ENCODE measurements at regions of chr11 and their contacts with region 1.

Region 1: GRCh38 chr11:118290923-118291322 is 13.6 kb upstream of the CD3E start:
- DNase-seq: peak; percentile 50
- H3K4me3 Mint-ChIP-seq: peak overlapping the region; percentile 44
- H3K27ac Mint-ChIP-seq: no peak overlapping the region
- H3K4me1 Mint-ChIP-seq: peaks cover 34% of the 10 kb centered on the region
- H3K27me3 Mint-ChIP-seq: no peaks in the 10 kb centered on the region
- CTCF ChIP-seq: peak; percentile 12

Region 2: DNA sequence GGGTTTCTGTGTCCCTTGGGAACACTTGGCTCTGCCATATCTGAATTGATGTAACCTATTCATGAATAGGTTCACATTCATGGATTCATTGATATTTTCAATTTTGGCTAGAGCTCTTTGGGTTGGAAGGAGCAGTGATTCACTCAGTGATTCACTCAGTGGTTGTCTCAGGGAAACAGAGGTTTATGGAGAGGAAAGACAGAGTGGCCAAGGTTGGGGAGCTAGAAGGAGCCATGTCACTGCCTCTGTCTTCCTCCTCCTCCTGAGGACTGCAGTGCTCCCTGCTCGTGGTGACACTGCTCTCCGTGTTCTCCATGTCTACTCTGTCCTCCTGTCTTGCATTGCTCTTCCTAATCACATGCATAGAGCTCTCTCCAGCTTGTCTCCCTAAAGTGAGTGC is 945.9 kb before region 1 on chr11:
- CTCF ChIA-PET with region 1: no interaction called
- intact Hi-C with region 1: no loop called
- DNase-seq: no peak
- H3K4me3 Mint-ChIP-seq: no peak overlapping the region
- H3K27ac Mint-ChIP-seq: no peak overlapping the region
- H3K4me1 Mint-ChIP-seq: no peaks in the 10 kb centered on the region
- H3K27me3 Mint-ChIP-seq: no peaks in the 10 kb centered on the region
- CTCF ChIP-seq: no peak

Region 3: DNA sequence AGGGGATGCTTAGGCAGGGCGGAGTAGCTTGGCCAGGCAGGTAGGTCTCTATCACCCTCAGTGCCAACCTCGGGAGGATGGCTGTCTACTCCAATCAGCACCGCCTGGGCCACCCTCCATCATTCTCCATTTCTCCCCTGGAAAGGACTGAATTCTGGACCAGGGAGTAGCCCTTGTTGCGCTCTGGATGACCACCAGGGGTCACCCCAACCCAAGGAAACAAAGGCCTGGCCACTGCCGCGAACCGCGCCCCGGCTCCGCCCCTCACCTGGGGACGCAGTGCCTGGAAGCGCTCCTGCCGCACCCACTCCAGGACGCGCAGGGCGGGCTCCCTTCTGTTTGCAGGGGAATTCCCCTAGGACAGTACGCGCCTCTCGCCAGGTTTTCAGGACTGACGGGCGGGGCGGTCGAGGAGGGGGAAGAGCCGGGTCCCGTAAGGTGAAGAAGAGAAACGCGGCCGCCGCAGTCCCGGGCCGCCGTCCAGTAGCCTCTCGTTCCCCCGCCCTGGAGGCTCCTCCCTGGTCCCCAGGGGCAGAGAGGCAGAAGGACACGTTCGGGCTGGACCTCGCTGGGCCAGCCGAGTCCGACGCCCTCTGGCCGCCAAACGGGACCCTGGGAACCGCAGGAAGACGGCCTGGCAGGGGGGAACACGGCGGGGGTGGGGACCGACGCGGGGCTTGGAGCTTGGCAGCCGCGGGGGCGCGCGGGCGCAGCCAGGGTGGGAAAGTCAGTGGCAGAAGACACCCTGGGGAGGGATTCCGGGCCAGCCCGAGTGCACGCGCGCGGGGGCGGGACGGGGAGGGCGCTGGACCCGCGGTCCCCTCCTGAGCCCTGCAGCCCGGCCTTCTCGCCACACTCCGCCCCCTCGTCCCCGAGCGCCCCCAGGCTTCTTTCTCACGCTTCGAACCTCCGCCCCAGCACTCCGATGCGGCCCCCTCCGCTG is 145.4 kb before region 1 on chr11:
- CTCF ChIA-PET with region 1: no interaction called
- intact Hi-C with region 1: loop called (anchors 1 kb)
- DNase-seq: peak; percentile 91
- H3K4me3 Mint-ChIP-seq: peak overlapping the region; percentile 81
- H3K27ac Mint-ChIP-seq: no peak overlapping the region
- H3K4me1 Mint-ChIP-seq: peaks cover 9% of the 10 kb centered on the region
- H3K27me3 Mint-ChIP-seq: peaks cover 61% of the 10 kb centered on the region
- CTCF ChIP-seq: peak; percentile 73

Region 4: DNA sequence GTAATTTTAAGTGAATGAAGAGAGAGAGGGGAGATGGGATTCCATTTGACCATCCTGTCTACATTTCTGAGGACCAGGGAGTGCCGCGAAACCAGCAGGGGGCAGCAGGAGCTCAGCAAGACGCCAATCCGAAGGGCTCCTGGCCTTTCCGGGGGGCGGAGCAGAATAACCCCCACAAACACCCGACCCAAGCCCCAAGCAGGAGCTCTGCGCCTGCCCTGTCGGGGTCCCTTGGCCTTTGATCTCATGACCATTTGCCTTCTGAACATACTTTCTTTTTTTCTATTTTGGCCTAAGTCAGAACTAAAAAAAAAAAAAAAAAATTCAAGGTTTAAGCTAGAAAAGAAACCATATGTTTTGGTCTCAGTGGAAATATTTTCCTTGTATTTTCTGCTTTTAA is 92.6 kb before region 1 on chr11:
- CTCF ChIA-PET with region 1: interaction called, 20 read pairs
- intact Hi-C with region 1: loop called (anchors 1 kb)
- DNase-seq: peak; percentile 79
- H3K4me3 Mint-ChIP-seq: no peak overlapping the region
- H3K27ac Mint-ChIP-seq: no peak overlapping the region
- H3K4me1 Mint-ChIP-seq: peaks cover 15% of the 10 kb centered on the region
- H3K27me3 Mint-ChIP-seq: no peaks in the 10 kb centered on the region
- CTCF ChIP-seq: peak; percentile 78

Region 5: DNA sequence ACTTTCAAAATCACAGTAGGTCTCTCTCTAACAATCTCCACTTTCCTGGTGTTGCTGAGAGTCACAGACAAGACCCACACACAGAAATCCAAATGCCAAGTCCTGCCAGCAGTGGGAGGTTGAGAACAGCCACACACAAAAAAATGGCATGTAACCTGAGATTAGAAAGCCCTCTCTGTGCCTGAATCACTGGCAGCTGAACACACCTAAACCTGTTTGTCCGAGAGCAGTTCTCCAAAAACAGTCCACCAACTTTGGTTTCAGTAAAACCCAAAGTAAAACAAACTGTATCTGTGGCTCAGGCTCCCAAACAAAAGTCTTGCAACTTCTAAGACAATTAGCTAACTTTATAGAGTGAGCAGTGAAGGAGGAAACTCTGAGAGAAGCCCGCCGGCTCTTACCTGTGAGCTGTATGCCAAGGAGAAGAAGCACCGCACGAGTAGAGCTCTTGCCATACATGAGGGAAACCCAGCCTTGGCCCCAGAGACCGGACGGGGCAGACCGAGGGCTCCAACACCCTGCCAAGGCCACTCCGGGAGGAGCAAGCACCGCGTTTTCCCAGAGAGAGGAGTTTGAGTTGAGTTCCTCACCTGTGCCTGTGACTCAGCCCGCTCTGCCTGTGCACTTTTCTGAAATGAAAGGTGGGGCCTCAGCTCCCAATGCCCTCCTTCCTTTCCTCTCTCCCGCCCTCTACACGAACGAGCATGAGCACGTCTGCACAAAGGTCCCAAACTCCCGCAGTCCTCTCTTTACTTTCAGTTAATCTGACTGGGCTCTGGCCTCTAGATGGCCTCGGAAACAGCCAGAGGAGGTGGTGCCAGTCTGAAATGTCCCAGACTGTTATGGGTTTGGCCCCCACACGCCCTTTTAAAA is 27.0 kb before region 1 on chr11 and contains the start of gene MPZL2:
- CTCF ChIA-PET with region 1: interaction called, 3 read pairs
- intact Hi-C with region 1: loop called (anchors 2 kb)
- DNase-seq: peak; percentile 79
- H3K4me3 Mint-ChIP-seq: peak within 1 kb of the TSS; percentile 94
- H3K27ac Mint-ChIP-seq: peak within 1 kb of the TSS; percentile 98
- H3K4me1 Mint-ChIP-seq: peaks cover 37% of the 10 kb centered on the region
- H3K27me3 Mint-ChIP-seq: no peaks in the 10 kb centered on the region
- CTCF ChIP-seq: no peak
- total RNA-seq, gene MPZL2: 69.6 and 81.7 TPM in 2 replicates

Region 6: GRCh38 chr11:118301600-118302195 is 10.8 kb after region 1 on chr11:
- CTCF ChIA-PET with region 1: no interaction called
- intact Hi-C with region 1: no loop called
- DNase-seq: no peak
- H3K4me3 Mint-ChIP-seq: no peak overlapping the region
- H3K27ac Mint-ChIP-seq: no peak overlapping the region
- H3K4me1 Mint-ChIP-seq: no peaks in the 10 kb centered on the region
- H3K27me3 Mint-ChIP-seq: peaks cover 44% of the 10 kb centered on the region
- CTCF ChIP-seq: no peak

Region 7: DNA sequence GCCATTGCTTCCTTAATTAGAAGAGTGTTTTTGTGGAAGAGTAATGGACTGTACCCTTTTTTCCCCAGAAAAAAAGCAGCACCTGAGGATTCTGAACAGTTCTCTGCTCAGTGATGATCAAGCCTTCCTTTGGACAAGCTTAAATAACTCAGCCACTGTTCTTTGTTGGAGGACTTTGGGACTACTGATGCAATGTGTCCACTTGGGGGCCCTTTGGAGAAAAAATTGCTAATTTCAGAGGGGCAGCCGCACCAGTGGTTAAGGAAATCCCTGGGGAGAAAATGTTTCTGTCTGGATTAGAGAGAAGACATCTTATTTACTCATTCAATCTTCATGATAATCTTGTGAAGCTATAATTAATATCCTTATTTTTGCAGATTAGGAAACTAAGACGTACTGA is 140.0 kb after region 1 on chr11:
- CTCF ChIA-PET with region 1: no interaction called
- intact Hi-C with region 1: no loop called
- DNase-seq: no peak
- H3K4me3 Mint-ChIP-seq: no peak overlapping the region
- H3K27ac Mint-ChIP-seq: no peak overlapping the region
- H3K4me1 Mint-ChIP-seq: peaks cover 18% of the 10 kb centered on the region
- H3K27me3 Mint-ChIP-seq: no peaks in the 10 kb centered on the region
- CTCF ChIP-seq: no peak

Region 8: DNA sequence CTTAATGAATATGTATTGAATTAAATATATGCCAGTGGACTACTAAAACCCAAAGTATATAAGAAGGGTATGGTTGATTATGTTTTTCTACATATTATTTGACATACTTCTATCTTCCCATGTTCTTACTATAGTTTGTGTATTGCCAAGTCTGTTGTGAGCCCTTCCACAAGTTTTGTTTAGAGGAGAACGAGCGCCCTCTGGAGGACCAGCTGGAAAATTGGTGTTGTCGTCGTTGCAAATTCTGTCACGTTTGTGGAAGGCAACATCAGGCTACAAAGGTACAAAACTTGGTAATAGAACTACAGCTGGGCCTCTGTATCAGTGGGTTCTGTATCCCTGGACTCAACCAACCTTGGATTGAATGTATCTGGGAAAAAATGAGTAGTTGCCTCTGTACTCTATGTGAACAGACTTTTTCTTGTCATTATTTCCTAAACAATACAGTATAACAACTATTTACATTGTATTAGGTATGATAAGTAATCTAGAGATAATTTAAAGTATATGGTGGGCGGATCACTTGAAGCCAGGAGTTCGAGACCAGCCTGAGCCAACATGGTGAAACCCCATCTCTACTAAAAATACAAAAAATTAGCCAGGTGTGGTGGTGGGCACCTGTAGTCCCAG is 197.7 kb after region 1 on chr11:
- CTCF ChIA-PET with region 1: interaction called, 4 read pairs
- intact Hi-C with region 1: loop called (anchors 10 kb)
- DNase-seq: peak; percentile 64
- H3K4me3 Mint-ChIP-seq: no peak overlapping the region
- H3K27ac Mint-ChIP-seq: no peak overlapping the region
- H3K4me1 Mint-ChIP-seq: no peaks in the 10 kb centered on the region
- H3K27me3 Mint-ChIP-seq: no peaks in the 10 kb centered on the region
- CTCF ChIP-seq: peak; percentile 54